Psoas muscle (tissue), 8 donors: ENCODE measurements at regions of chr9 and their contacts with region 1.

Region 1: DNA sequence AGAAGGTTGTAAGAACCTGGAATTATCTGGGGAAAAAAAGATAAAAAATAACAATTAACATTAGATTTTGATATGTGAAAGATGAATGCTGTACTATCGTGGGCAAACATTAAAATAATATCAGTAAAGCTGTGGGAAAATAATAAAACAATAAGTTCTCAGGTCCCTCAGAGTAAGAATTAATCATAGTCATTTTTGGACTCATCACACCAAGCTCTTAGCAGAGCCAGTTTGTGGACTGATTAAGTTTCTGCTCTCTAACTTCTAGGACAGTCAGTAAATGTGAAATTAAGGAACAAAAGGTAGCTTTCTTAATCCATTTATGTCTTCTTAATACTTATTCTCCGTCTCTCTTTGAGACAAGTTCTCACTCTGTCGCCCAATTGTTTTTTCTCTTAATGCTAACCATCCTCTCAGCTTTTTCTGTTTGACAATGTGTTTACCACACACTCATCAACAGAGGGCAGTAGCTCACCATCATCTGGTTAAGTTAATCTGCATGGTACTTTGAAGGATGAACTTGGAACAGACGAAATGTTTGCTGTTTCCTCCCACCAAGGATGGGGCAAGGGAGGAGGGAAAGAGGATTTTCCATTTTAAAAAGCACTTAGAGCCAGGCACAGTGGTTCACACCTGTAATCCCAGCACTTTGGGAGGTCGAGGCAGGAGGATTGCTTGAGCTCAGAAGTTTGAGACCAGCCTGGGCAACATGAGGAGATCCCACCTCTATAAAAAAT is 5.3 kb upstream of the ACO1 start:
- DNase-seq: no peak
- ATAC-seq: peak; percentile 78 to 93 (median 88)
- H3K4me3 ChIP-seq: no peak overlapping the region
- H3K27ac ChIP-seq: no peak overlapping the region
- H3K4me1 ChIP-seq: no peaks in the 10 kb centered on the region
- H3K27me3 ChIP-seq: no peaks in the 10 kb centered on the region
- CTCF ChIP-seq: peak; percentile 77

Region 2: GRCh38 chr9:32300373-32300772 is 78.8 kb before region 1 on chr9:
- intact Hi-C with region 1: no loop called
- DNase-seq: no peak
- ATAC-seq: no peak
- H3K4me3 ChIP-seq: no peak overlapping the region
- H3K27ac ChIP-seq: no peak overlapping the region
- H3K4me1 ChIP-seq: no peaks in the 10 kb centered on the region
- H3K27me3 ChIP-seq: no peaks in the 10 kb centered on the region
- CTCF ChIP-seq: no peak

Region 3: DNA sequence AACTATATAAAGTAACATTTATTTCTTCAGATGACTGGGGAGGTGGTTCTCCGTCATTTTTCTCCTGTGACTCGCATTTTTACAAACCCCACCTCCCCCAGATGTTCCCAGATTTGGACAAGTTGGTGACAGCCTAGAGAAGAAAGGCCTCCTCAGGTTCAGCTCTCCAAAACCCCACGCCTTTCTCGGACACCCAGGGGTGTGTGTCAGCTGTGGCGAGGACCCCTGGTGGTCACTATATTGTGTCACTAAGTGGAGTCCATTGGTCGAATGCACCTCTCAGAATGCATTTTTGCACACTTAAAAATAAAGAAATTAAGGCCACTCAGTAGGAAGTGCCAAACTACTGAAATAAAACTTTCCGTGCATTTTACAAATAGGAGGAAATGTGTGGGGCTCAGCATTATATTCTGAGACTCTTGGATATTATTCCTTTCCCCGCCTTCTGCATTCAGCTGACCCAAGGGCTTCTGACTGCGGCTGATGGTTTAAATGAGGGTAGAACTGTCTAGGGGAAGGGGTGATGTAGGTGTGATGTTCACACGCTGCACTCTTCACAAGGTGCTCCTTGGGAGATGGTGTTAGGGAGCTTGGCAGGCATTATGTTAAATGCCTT is 52.9 kb after region 1 on chr9:
- intact Hi-C with region 1: loop called (anchors 1 to 5 kb)
- DNase-seq: peak; percentile 23 to 61
- ATAC-seq: peak; percentile 58 to 84 (median 66)
- H3K4me3 ChIP-seq: no peak overlapping the region
- H3K27ac ChIP-seq: no peak overlapping the region
- H3K4me1 ChIP-seq: no peaks in the 10 kb centered on the region
- H3K27me3 ChIP-seq: no peaks in the 10 kb centered on the region
- CTCF ChIP-seq: peak; percentile 52

Region 4: GRCh38 chr9:32579706-32580331 is 200.7 kb after region 1 on chr9:
- intact Hi-C with region 1: loop called in 1 of 2 experiments (anchors 1 kb)
- DNase-seq: peak; percentile 59 to 76
- ATAC-seq: peak in 2 of 4 donors; percentile 53 to 75
- H3K4me3 ChIP-seq: no peak overlapping the region
- H3K27ac ChIP-seq: no peak overlapping the region
- H3K4me1 ChIP-seq: no peaks in the 10 kb centered on the region
- H3K27me3 ChIP-seq: no peaks in the 10 kb centered on the region
- CTCF ChIP-seq: peak; percentile 91

Region 5: GRCh38 chr9:32854271-32854670 is 475.1 kb after region 1 on chr9:
- intact Hi-C with region 1: no loop called
- DNase-seq: no peak
- ATAC-seq: no peak
- H3K4me3 ChIP-seq: no peak overlapping the region
- H3K27ac ChIP-seq: no peak overlapping the region
- H3K4me1 ChIP-seq: no peaks in the 10 kb centered on the region
- H3K27me3 ChIP-seq: no peaks in the 10 kb centered on the region
- CTCF ChIP-seq: no peak